Left lung (tissue), 14 donors: ENCODE measurements at regions of chr2 and their contacts with region 1.

Region 1: GRCh38 chr2:200901459-200902072 is 12.4 kb downstream of the NIF3L1 start:
- DNase-seq: peak in 3 of 4 donors; percentile 24 to 72 (median 46)
- ATAC-seq: peak; percentile 95
- H3K4me3 ChIP-seq: no peak overlapping the region
- H3K27ac ChIP-seq: no peak overlapping the region
- H3K4me1 ChIP-seq: no peaks in the 10 kb centered on the region
- H3K27me3 ChIP-seq: no peaks in the 10 kb centered on the region
- CTCF ChIP-seq: peak; percentile 60 to 78

Region 2: DNA sequence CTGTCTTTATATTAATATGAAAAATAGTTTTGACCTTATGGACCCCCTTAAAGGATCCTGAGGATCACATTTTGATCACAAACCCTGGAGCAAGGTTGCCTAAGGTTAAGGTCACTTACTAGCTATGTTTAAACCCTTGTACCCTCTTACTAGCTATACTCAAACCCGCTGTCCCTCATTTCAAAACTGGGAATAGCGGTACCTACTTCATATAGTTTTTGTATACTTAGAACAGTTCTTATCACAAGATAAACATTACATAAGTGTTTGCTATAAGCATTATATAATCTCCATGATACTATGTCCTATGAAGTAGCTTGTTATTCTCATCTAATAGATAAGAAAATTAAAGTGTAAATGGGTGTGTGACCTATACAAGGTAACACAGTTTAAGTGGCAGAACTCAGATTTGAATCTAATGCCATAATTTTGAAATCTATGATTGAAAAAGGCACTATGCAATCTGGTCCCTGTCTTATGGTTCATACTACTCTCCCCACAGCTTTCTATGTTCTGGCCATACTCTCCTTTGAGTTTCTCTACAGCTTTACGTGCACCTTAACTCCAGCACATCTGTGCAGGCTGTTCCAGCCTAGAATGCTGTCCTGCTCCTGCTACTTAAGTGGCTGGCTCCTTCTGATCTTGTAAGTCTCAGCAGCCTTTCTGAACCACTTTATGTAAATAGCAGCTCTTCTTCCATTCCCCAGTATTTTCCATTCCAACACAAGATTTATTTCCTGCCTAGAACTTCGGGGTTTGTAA is 139.5 kb after region 1 on chr2:
- intact Hi-C with region 1: no loop called
- DNase-seq: no peak
- ATAC-seq: peak; percentile 35
- H3K4me3 ChIP-seq: no peak overlapping the region
- H3K27ac ChIP-seq: peak overlapping the region in 1 of 2 donors; percentile 0
- H3K4me1 ChIP-seq: peaks cover 0 to 6% of the 10 kb centered on the region in 2 donors
- H3K27me3 ChIP-seq: no peaks in the 10 kb centered on the region
- CTCF ChIP-seq: no peak

Region 3: GRCh38 chr2:201071479-201072200 is 170.1 kb after region 1 on chr2 and contains the starts of genes HYCC2 and NDUFB3:
- intact Hi-C with region 1: loop called in 1 of 2 experiments (anchors 10 kb)
- DNase-seq: peak; percentile 90 to 97 (median 94)
- ATAC-seq: peak; percentile 99
- H3K4me3 ChIP-seq: peak within 1 kb of the TSS; percentile 82 to 83
- H3K27ac ChIP-seq: peak within 1 kb of the TSS; percentile 74 to 89
- H3K4me1 ChIP-seq: peaks cover 24 to 64% of the 10 kb centered on the region in 2 donors
- H3K27me3 ChIP-seq: no peaks in the 10 kb centered on the region
- CTCF ChIP-seq: peak in 1 of 2 donors; percentile 44
- polyA plus RNA-seq, gene HYCC2: 13.4 to 15.7 (median 14.8) TPM
- polyA plus RNA-seq, gene NDUFB3: 58.2 to 69.3 (median 64.3) TPM

Region 4: DNA sequence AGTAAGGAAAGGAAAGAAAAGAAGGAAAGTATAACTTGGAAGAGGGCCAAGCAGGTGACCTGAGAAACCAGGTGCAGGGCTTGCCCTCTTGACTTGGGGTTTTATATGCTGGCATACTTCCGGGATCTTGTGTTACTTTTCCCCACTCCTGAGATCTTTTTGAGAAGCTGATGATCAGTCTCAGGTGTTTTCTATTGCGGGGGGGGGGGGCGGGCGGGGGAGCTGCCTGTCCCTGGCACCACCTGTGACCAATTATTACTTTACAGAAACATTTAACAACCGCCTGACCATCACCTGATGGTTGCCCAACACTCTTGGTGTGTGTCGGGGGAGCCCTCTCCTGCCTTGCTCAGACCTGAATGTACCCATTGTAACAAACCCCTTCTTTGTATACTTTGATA is 274.5 kb after region 1 on chr2:
- intact Hi-C with region 1: loop called in 1 of 2 experiments (anchors 5 kb)
- DNase-seq: no peak
- ATAC-seq: peak; percentile 52
- H3K4me3 ChIP-seq: no peak overlapping the region
- H3K27ac ChIP-seq: peak overlapping the region in 1 of 2 donors; percentile 5
- H3K4me1 ChIP-seq: peaks cover 0 to 18% of the 10 kb centered on the region in 2 donors
- H3K27me3 ChIP-seq: no peaks in the 10 kb centered on the region
- CTCF ChIP-seq: no peak